Ascending aorta (tissue), 2 donors: ENCODE measurements at regions of chr17 and their contacts with region 1.

Region 1: GRCh38 chr17:48555258-48556228 is 10.6 kb upstream of the HOXB2 start:
- DNase-seq: no peak
- H3K4me3 ChIP-seq: peak overlapping the region; percentile 71 to 80
- H3K27ac ChIP-seq: peak overlapping the region; percentile 84 to 97
- H3K4me1 ChIP-seq: peaks cover 15 to 64% of the 10 kb centered on the region in 2 donors
- H3K27me3 ChIP-seq: no peaks in the 10 kb centered on the region
- CTCF ChIP-seq: peak in 1 of 3 experiments; percentile 27

Region 2: DNA sequence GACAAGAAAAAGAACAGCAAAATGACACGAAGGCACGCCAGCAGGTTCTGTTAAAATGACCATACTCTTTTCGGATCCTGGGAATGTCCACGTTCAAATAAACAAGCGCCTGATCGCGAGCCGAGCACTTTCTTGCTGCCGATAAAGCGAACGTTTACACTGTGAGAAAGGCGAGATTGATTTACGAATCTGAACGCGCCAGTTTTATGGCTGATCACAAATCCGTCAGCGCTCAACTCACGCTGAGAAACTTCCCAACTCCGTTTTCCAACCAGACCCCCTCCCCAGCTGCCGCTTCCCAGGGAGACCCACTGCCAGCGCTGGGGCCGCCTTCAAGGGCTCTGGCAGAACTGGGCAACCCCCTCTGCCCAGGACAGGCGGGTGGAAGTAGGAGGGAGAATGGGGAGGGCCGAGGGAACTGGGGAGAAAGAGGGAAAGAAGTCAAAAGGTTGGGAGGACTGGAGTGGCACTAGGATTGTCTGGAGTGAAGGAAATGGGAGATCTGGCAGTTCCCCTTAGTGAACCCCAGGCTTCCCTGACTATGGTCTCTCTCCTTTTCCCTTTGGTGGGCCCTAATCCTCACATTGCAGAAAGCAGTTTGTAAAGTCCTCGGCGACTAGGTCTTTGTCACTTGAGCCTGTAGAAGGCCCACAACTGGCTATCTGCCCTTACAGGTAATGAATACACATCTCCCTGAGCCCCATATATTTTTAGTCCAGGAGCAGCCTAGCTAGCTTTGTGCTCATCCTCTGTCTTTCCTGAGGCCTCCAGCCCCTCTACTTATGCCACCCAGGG is 15.7 kb after region 1 on chr17:
- intact Hi-C with region 1: loop called (anchors 2 kb)
- DNase-seq: no peak
- H3K4me3 ChIP-seq: peak overlapping the region; percentile 46 to 75
- H3K27ac ChIP-seq: peak overlapping the region; percentile 93 to 97
- H3K4me1 ChIP-seq: peaks cover 7 to 85% of the 10 kb centered on the region in 2 donors
- H3K27me3 ChIP-seq: no peaks in the 10 kb centered on the region
- CTCF ChIP-seq: no peak

Region 3: GRCh38 chr17:48724251-48725003 is 168.9 kb after region 1 on chr17:
- intact Hi-C with region 1: no loop called
- DNase-seq: peak in 1 of 2 donors; percentile 89
- H3K4me3 ChIP-seq: peak overlapping the region in 1 of 2 donors; percentile 19
- H3K27ac ChIP-seq: no peak overlapping the region
- H3K4me1 ChIP-seq: peaks cover 6 to 11% of the 10 kb centered on the region in 2 donors
- H3K27me3 ChIP-seq: peaks cover 65% of the 10 kb centered on the region
- CTCF ChIP-seq: peak; percentile 53 to 77 (median 62)